CD8-positive, alpha-beta T cell (primary cell): ENCODE measurements at regions of chr22 and their contacts with region 1.

Region 1: DNA sequence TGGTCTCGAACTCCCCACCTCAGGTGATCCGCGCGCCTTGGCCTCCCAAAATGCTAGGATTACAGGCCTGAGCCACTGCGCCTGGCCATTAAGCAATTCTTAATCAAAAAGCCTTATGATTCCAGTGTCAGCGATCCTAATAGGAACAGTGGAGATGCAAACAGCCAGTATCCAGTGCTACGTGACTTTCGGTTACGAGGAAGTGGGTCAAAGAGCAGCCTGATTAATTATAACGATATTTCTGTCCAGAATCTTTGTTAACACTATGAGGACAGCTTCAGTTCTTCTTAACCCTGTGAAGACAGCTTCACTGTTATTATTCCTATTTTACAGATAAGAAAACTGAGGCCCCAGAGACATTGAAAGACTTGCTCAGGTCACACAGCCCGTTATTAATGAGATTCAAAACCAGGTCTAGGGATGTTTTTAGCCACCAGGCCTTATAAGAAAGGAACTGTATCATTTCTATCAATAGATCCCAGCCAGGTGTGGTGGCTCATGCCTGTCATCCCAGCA is 17.3 kb upstream of the HMOX1 start:
- DNase-seq: no peak
- ATAC-seq: no peak
- H3K4me3 ChIP-seq: no peak overlapping the region
- H3K4me3 Mint-ChIP-seq: no peak overlapping the region
- H3K27ac ChIP-seq: no peak overlapping the region
- H3K27ac Mint-ChIP-seq: no peak overlapping the region
- H3K4me1 ChIP-seq: no peaks in the 10 kb centered on the region
- H3K4me1 Mint-ChIP-seq: no peaks in the 10 kb centered on the region
- H3K27me3 ChIP-seq: peaks cover 0 to 5% of the 10 kb centered on the region in 2 experiments
- H3K27me3 Mint-ChIP-seq: peaks cover 21% of the 10 kb centered on the region
- CTCF ChIP-seq: no peak

Region 2: DNA sequence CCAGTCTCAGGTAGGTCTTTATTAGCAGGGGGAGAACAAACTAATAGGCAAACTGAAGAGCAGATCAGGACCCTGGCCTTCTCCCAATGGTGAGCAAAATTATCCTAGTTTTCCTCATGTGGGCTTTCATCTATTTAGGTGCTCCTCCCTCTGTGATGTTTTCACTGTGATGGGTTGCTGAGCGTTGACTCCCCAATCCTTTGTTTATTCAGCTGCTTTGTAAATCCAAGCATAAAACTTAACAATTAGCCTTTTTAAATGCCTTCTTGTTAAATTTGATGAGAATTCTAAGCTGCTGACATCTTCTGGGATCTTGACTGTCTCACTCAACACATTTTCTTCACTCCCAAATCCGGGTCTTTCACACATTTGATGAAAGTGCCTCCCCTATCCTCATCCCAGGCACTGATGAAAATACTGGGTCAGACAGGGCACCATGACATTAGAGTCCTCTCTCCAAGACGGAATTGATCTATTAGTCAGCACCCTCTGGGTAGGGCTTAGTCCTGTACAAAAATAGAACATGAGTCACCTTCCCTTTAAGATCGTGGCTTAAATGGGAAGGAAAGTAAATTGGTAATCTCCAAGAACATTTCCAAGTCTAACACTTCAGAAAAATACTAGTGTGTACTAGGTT is 497.0 kb before region 1 on chr22:
- CTCF ChIA-PET with region 1: no interaction called
- POLR2A ChIA-PET with region 1: no interaction called
- intact Hi-C with region 1: no loop called
- DNase-seq: no peak
- ATAC-seq: no peak
- H3K4me3 ChIP-seq: no peak overlapping the region
- H3K4me3 Mint-ChIP-seq: no peak overlapping the region
- H3K27ac ChIP-seq: no peak overlapping the region
- H3K27ac Mint-ChIP-seq: no peak overlapping the region
- H3K4me1 ChIP-seq: no peaks in the 10 kb centered on the region
- H3K4me1 Mint-ChIP-seq: peaks cover 3% of the 10 kb centered on the region
- H3K27me3 ChIP-seq: no peaks in the 10 kb centered on the region
- H3K27me3 Mint-ChIP-seq: peaks cover 10% of the 10 kb centered on the region
- CTCF ChIP-seq: no peak

Region 3: GRCh38 chr22:34886812-34887211 is 476.8 kb before region 1 on chr22:
- CTCF ChIA-PET with region 1: no interaction called
- POLR2A ChIA-PET with region 1: no interaction called
- intact Hi-C with region 1: no loop called
- DNase-seq: no peak
- ATAC-seq: no peak
- H3K4me3 ChIP-seq: no peak overlapping the region
- H3K4me3 Mint-ChIP-seq: no peak overlapping the region
- H3K27ac ChIP-seq: no peak overlapping the region
- H3K27ac Mint-ChIP-seq: no peak overlapping the region
- H3K4me1 ChIP-seq: no peaks in the 10 kb centered on the region
- H3K4me1 Mint-ChIP-seq: no peaks in the 10 kb centered on the region
- H3K27me3 ChIP-seq: no peaks in the 10 kb centered on the region
- H3K27me3 Mint-ChIP-seq: no peaks in the 10 kb centered on the region
- CTCF ChIP-seq: no peak

Region 4: GRCh38 chr22:35317680-35318290 is 45.8 kb before region 1 on chr22:
- CTCF ChIA-PET with region 1: no interaction called
- POLR2A ChIA-PET with region 1: no interaction called
- intact Hi-C with region 1: loop called in 1 of 2 experiments (anchors 2 kb)
- DNase-seq: no peak
- ATAC-seq: no peak
- H3K4me3 ChIP-seq: no peak overlapping the region
- H3K4me3 Mint-ChIP-seq: no peak overlapping the region
- H3K27ac ChIP-seq: no peak overlapping the region
- H3K27ac Mint-ChIP-seq: no peak overlapping the region
- H3K4me1 ChIP-seq: no peaks in the 10 kb centered on the region
- H3K4me1 Mint-ChIP-seq: peaks cover 15% of the 10 kb centered on the region
- H3K27me3 ChIP-seq: no peaks in the 10 kb centered on the region
- H3K27me3 Mint-ChIP-seq: no peaks in the 10 kb centered on the region
- CTCF ChIP-seq: no peak

Region 5: DNA sequence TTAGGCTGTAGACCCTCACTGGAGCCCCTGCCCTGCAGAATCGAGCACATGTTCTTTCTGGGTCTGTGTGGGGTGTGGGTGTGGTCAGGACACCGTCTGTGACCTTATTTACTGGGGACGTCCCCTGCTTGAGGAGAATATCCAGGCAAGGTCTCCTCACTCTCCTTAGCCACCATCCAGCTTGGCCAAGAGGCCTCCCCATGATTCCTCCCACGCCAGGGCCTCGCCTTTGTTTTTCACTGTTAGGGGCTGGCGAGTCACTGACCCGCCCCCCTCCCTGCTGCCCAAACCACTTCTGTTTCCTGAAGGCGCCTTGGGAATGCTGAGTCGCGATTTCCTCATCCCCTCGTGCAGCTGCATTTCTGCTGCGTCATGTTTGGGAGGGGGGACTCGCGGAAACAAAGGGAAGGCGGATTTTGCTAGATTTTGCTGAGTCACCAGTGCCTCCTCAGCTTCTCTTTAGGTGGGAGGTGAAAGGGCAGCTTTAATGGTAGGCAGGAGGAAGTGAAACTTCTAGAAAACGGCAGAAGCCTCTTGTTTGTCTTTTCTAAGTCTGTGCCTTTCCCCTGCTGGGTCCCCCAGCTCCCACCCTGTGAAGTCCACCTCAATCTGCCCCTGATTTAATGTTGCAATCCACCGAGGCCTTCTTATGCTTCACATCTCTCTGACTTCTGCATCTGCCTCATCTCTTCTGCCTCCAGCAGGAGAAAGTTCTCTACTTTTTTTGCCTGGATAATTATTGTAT is 13.3 kb after region 1 on chr22:
- CTCF ChIA-PET with region 1: no interaction called
- POLR2A ChIA-PET with region 1: no interaction called
- intact Hi-C with region 1: no loop called
- DNase-seq: peak in 2 of 9 experiments; percentile 32 to 64
- ATAC-seq: peak; percentile 23
- H3K4me3 ChIP-seq: no peak overlapping the region
- H3K4me3 Mint-ChIP-seq: no peak overlapping the region
- H3K27ac ChIP-seq: no peak overlapping the region
- H3K27ac Mint-ChIP-seq: no peak overlapping the region
- H3K4me1 ChIP-seq: peaks cover 20% of the 10 kb centered on the region
- H3K4me1 Mint-ChIP-seq: peaks cover 24% of the 10 kb centered on the region
- H3K27me3 ChIP-seq: no peaks in the 10 kb centered on the region
- H3K27me3 Mint-ChIP-seq: peaks cover 8% of the 10 kb centered on the region
- CTCF ChIP-seq: no peak